ENCODE measurements at regions of chr20 and their contacts with region 1.

Region 1: DNA sequence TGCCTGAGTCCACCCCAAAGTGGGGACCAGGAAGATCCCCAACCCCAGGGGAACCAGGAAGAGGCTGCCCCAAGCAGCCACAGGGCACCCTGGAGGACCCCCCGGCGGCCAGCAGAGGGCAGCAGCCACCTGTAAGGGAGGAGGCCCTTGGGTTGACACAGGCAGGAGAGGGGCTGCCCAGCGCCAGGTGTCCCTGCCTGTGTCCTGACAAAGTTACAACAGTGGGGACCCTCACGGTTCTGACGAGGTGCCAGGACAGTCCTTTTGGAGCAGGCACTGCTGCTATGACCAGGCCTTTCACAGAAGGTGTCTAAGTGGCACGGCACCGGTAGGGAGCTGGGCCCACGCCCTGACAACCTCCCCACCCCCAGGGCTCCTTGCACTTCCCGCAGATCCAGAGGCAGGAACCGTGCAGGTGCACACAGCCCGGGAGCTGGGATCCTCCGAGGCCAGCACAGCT is 176.7 kb downstream of the BMP7 start:
- DNase-seq: peak; percentile 83

Region 2: DNA sequence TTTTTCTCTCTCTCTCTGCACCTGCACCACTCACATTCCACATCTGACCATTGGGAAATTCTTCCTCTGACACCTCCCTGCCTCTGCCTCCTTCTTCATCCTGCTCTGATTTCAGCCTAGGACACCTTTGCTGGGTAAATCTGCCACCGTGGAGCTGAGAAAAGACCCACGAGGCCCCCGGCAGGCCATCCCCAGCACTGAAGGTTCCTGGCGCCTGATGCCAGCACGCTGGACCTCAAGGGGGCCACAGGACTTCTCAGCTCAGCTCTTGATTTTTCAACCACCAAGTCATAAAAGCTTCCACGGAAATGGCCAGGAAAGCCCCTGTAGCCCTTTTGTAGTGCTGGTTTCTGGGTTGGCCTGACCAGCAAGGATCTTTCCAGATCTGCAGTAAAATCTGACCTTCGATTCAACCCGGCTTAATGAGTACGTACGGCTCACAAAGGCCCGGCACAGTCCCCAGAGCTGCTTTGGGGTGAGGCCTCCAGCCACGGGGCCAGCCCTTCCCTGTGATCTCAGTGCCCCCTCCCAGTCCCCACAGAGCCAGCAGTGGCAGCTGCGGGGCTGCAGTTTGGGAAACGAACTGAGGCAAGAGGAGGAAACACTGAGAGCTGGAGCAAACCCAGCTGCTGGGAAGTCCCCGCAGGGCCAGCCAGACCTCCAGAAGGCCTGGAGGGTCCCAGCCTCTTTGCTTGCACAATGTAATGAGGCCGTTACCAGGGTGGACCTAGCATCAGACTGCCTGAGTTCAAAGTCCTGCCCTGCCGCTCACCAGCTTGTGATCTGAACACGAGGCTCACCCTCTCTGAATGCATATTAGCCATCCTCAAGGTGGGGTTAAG is 19.2 kb after region 1 on chr20:
- CTCF ChIA-PET with region 1: no interaction called
- POLR2A ChIA-PET with region 1: no interaction called
- DNase-seq: no peak

Region 3: DNA sequence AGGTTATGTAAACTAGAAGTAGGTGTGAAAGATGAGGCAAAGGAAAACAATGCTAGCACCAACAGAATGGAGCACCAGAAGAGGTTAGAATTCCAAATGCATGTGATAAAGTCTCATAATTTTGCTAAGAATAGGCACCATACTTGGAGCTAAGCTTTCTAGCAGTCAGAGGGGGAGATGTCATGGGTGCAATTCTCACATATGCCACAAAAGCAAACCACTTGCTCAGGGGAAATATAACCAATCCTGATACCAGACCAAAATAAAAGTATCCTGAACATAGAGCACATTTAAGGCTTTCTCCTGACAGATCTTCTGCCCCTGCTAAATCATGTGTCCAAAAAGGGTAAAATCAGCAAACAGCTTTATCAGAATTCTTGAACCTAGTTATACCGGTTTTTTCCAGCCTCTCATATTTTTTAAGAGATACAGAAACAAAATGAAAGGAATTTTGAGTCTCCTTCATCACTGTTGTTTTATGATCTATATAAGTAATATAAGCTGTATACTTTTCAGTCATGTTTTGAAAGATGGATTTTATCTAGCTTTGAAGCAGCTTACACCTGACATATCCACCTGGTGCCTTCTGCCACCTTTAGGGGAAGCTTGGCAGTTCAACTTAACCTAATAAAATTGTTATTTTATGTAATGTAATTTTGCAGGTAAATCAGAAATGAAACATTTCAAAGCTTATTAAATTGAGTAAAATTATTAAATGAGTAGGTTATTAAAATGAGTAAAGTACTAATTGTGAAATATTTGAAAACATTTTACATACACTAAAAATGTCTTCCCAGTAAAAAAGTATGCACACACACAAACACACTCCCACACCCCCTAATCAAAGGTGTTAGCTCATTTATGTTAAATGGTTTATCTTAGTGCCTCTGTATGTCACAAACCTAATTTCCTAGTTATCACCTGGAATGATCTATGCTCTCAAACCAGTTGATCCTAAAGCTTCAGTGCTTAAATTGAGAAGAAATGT is 242.7 kb after region 1 on chr20:
- CTCF ChIA-PET with region 1: interaction called, 19 read pairs
- POLR2A ChIA-PET with region 1: no interaction called
- DNase-seq: no peak

Region 4: DNA sequence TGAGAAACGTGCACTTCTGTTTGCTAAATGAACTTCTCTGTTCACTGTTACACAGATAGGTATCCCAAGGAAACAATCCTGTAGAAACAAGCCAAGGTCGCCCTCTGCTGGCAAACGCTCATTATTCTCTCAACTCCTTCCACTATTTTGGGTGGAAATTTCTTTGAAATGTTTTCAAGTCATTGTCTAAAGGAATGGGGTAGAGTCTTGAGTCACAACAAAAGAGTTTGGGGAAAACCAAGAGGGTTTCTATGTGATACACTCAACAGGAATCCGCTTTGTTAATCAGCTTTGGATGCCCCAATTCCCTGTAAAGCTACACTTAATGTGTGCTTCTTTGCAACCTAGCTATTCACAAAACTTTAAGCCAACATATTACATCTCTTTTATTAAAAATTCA is 256.8 kb after region 1 on chr20:
- CTCF ChIA-PET with region 1: interaction called, 15 read pairs
- POLR2A ChIA-PET with region 1: no interaction called
- DNase-seq: peak; percentile 49